RWPE1 (cell line): ENCODE measurements at regions of chr20 and their contacts with region 1.

Region 1: GRCh38 chr20:48904365-48905296 is 16.9 kb upstream of the ARFGEF2 start:
- DNase-seq: peak; percentile 86
- H3K27ac ChIP-seq: no peak overlapping the region
- CTCF ChIP-seq: peak; percentile 97

Region 2: DNA sequence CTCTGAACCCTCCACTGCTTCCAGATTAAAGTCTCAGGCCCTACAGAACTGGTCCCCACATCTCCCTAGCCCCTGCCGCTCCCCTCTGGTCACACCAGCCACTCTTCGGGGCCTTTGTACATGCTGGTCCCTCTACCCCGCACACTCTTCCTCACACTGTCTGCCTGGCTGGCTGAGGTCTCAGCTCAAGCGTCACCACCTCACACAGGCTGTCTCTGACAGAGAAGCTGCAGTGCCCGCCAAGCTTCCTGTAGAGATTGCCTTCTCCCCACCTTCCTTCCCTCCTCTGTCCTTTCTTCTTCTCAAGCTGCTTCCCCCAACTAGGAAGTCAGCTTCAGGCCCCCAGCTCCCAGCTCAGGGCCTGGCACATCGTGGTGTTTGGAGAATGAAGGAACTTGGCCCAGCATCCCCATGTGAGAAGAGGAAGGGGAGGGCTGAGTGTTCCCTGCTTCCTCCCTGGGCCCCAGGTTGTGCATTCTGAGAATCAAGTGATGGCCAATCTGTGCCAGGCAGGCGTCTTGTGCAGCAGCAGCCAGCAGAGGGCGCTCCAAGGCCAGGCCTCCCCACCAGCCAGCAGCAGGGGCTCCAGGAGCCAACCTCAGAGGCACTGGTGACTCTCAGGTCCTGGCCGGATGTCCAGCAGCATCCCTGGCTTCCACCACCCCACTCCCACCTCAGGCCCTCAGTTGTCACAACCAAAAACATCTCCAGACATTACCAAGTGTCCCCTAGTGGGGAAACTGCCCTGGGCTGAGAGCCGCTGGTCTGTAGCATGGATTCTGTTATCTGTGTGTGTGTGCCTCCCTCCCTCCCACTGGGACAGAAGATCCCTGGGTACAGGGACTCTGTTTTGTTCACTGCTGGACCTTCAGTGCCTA is 269.0 kb before region 1 on chr20:
- CTCF ChIA-PET with region 1: interaction called, 17 read pairs
- POLR2A ChIA-PET with region 1: no interaction called
- DNase-seq: peak; percentile 81
- H3K27ac ChIP-seq: no peak overlapping the region
- CTCF ChIP-seq: peak; percentile 98

Region 3: DNA sequence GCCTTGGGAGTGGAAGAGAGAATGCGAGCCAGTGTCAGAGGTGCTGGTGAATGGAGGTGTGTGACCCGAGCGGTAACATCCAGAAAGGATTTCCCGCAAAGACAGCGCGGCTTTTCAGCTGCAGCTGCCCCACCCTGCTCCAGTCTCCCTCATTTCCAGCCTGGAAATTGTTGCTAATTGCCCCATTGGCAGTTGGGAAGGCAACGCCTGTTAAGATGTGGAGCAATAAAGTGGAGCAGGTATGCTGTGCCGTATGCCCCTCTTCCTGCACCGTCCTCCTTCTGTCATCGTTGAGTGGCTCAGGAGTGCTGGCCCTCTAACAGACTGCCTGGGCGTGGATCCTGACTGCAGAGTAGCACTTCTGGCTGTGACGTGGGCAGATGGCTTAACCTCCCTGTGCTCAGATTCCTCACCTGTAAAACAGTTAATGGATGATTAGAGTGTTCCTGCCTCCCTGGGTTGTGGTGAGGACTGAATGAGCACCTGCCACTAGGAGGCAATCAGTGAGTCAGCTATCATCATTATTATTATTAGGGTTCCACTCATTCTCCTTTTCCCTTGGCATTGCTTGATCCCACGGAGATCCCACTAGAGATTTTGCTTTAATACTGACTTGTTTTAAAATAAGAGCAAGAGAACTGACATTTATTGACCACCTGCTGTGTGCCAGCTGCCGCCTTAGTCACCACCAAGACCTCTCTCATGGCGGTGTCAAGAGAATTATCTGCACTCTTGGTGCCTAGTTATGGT is 28.6 kb after region 1 on chr20:
- CTCF ChIA-PET with region 1: no interaction called
- POLR2A ChIA-PET with region 1: no interaction called
- DNase-seq: no peak
- H3K27ac ChIP-seq: 0 out of 2 replicates have a peak overlapping the region, but pooled peaks have one; percentile 2
- CTCF ChIP-seq: no peak